ENCODE measurements at regions of chr4 and their contacts with region 1.

Region 1: DNA sequence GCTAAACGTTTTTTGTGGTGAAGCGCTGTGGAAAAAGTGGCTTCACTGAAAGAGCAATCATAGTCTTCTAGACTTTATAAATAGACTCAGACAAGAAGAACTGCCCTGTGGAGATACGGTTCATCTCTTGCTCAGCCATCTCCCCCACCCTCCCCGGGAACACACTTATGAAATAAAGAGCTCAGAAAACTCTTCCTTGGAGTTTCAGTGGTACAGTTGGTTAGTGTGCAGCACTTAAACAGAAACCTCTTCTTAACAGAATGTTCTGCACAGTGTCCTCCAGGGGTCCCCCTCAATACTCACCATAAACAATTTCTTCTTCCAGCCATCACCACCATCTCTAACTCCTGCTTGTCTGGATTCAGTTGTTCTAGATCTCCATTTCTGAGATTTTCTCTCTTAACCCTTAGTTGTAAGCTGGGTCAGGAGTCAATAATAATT is 313.0 kb downstream of the ARHGAP10 start:
- DNase-seq: no peak
- ATAC-seq: peak; percentile 26 to 54 (median 31)
- H3K4me3 ChIP-seq: peak overlapping the region in 3 of 12 donors; percentile 4 to 23 (median 10)
- H3K27ac ChIP-seq: peak overlapping the region; percentile 71 to 95 (median 86)
- H3K4me1 ChIP-seq: peaks cover 0 to 56% (median 11%) of the 10 kb centered on the region in 12 donors
- H3K27me3 ChIP-seq: no peaks in the 10 kb centered on the region
- CTCF ChIP-seq: peak in 9 of 12 donors; percentile 7 to 43 (median 12)
- POLR2A ChIP-seq: no peak

Region 2: GRCh38 chr4:147994076-147994475 is 50.9 kb before region 1 on chr4:
- intact Hi-C with region 1: loop called in 1 of 10 experiments (anchors 5 kb)
- DNase-seq: no peak
- ATAC-seq: no peak
- H3K4me3 ChIP-seq: no peak overlapping the region
- H3K27ac ChIP-seq: peak overlapping the region in 3 of 12 donors; percentile 2 to 42 (median 16)
- H3K4me1 ChIP-seq: peaks cover 0 to 53% (median 21%) of the 10 kb centered on the region in 12 donors
- H3K27me3 ChIP-seq: no peaks in the 10 kb centered on the region
- CTCF ChIP-seq: no peak
- POLR2A ChIP-seq: no peak

Region 3: DNA sequence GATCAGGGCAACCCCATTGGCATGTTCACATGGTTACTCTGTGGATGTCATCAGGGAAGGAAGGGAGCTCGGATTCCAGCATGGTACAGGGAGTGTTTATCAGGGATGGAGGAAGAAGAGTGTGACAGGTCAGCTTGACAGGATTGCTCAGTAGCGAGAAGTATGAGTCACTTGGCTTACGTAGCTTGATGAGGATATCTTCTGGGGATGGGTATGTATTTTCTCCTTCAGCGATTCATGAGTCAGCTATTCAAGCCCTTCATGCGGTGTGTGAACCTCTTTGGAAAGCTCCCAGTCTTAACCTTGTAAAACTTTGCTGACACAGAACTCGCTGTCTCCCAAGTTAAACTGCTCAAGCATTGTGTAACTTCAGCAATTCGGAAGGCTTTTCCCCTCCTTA is 37.6 kb before region 1 on chr4:
- intact Hi-C with region 1: loop called in 1 of 10 experiments (anchors 5 kb)
- DNase-seq: no peak
- ATAC-seq: peak; percentile 29 to 94 (median 84)
- H3K4me3 ChIP-seq: no peak overlapping the region
- H3K27ac ChIP-seq: peak overlapping the region in 8 of 12 donors; percentile 14 to 76 (median 35)
- H3K4me1 ChIP-seq: peaks cover 0 to 52% (median 33%) of the 10 kb centered on the region in 12 donors
- H3K27me3 ChIP-seq: no peaks in the 10 kb centered on the region
- CTCF ChIP-seq: no peak
- POLR2A ChIP-seq: no peak

Measured in heart left ventricle (tissue), 16 donors.